Naive thymus-derived CD4-positive, alpha-beta T cell (primary cell): ENCODE measurements at regions of chr12 and their contacts with region 1.

Region 1: DNA sequence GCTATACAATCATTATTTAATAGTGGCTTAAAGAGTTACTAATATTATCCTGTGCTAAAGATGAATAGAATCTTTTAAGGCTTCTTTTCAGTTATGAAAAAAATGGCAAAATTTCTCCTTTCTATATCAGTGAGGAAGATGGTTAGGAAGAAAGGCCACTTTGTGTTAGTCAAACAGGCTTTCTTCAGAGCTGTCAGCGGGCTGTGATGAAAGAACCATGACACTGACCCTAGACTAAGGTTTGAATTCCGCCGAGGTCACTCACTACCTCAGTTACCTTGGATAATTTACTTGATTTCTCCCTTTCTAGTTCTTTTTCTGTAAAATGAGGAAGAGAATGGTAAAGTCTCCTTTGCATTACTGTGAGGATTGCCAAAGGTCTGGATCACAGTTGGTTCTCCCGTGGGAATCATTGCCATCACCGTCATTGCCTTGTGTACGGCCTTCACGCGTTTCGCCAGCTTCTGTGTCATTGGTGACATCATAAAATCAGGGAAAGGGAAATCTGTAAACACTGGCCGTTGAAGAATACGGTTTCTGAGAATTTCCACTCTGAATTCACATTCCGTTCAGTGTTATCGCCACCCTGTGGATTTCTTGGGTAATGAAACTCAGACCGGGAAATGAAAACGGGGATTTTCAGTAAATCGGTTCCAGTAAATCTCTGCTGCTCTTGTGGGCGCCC is 26.7 kb upstream of the YBX3 start:
- DNase-seq: peak; percentile 22 to 79 (median 67)
- ATAC-seq: peak; percentile 100
- H3K4me3 ChIP-seq: peak overlapping the region; percentile 1
- H3K4me3 Mint-ChIP-seq: peak overlapping the region in 8 of 10 donors; percentile 15 to 76 (median 64)
- H3K27ac ChIP-seq: no peak overlapping the region
- H3K27ac Mint-ChIP-seq: peak overlapping the region in 4 of 9 donors; percentile 7 to 60 (median 34)
- H3K4me1 ChIP-seq: peaks cover 0 to 4% of the 10 kb centered on the region in 2 donors
- H3K4me1 Mint-ChIP-seq: peaks cover 0 to 24% (median 6%) of the 10 kb centered on the region in 7 donors
- H3K27me3 ChIP-seq: peaks cover 0 to 4% of the 10 kb centered on the region in 2 donors
- H3K27me3 Mint-ChIP-seq: peaks cover 32 to 57% (median 33%) of the 10 kb centered on the region in 5 donors

Region 2: DNA sequence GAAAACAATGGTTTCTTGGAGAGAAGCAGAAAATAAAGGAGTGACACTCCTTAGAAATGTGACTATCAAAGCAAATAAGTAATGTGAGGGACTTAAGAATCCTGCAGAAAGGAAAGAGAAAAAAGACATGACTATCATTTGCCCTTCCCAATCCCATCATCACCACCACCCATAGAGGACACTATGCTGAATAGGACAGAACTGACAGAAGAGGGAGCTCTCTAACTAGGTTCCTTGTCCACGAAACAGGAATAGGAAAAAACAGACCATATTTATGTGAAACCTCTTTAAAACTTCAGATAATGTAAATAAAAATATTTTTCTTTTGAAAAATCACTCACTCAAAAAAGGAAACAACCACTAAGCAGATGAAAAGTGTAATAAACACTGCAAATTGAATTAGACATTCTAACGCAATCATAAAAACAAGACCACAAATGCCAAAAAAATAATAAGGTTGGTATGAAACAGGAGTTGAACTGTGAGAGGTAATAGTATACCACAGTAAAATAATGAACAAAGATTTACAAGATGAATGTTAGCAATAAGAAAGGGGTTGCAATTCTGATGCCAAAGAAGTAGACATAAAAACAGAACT is 418.1 kb before region 1 on chr12:
- CTCF ChIA-PET with region 1: no interaction called
- POLR2A ChIA-PET with region 1: no interaction called
- intact Hi-C with region 1: loop called (anchors 1 kb)
- DNase-seq: peak in 7 of 9 donors; percentile 9 to 51 (median 20)
- ATAC-seq: peak; percentile 63
- H3K4me3 ChIP-seq: no peak overlapping the region
- H3K4me3 Mint-ChIP-seq: no peak overlapping the region
- H3K27ac ChIP-seq: no peak overlapping the region
- H3K27ac Mint-ChIP-seq: peak overlapping the region in 1 of 9 donors; percentile 57
- H3K4me1 ChIP-seq: no peaks in the 10 kb centered on the region
- H3K4me1 Mint-ChIP-seq: peaks cover 0 to 6% (median 0%) of the 10 kb centered on the region in 7 donors
- H3K27me3 ChIP-seq: no peaks in the 10 kb centered on the region
- H3K27me3 Mint-ChIP-seq: peaks cover 0 to 6% (median 0%) of the 10 kb centered on the region in 5 donors

Region 3: GRCh38 chr12:10562306-10562933 is 187.4 kb before region 1 on chr12:
- CTCF ChIA-PET with region 1: no interaction called
- POLR2A ChIA-PET with region 1: no interaction called
- intact Hi-C with region 1: loop called in 1 of 2 experiments (anchors 1 kb)
- DNase-seq: peak in 7 of 9 donors; percentile 5 to 54 (median 40)
- ATAC-seq: peak; percentile 51
- H3K4me3 ChIP-seq: no peak overlapping the region
- H3K4me3 Mint-ChIP-seq: no peak overlapping the region
- H3K27ac ChIP-seq: no peak overlapping the region
- H3K27ac Mint-ChIP-seq: no peak overlapping the region
- H3K4me1 ChIP-seq: peaks cover 0 to 28% of the 10 kb centered on the region in 2 donors
- H3K4me1 Mint-ChIP-seq: peaks cover 0 to 16% (median 10%) of the 10 kb centered on the region in 7 donors
- H3K27me3 ChIP-seq: no peaks in the 10 kb centered on the region
- H3K27me3 Mint-ChIP-seq: peaks cover 7 to 40% (median 16%) of the 10 kb centered on the region in 5 donors

Region 4: GRCh38 chr12:10613349-10614055 is 136.3 kb before region 1 on chr12 and contains the start of gene MAGOHB:
- CTCF ChIA-PET with region 1: no interaction called
- POLR2A ChIA-PET with region 1: no interaction called
- intact Hi-C with region 1: loop called (anchors 1 to 2 kb)
- DNase-seq: peak; percentile 94 to 100 (median 97)
- ATAC-seq: peak; percentile 96
- H3K4me3 ChIP-seq: peak within 1 kb of the TSS; percentile 74
- H3K4me3 Mint-ChIP-seq: peak within 1 kb of the TSS; percentile 93 to 100 (median 98)
- H3K27ac ChIP-seq: peak within 1 kb of the TSS; percentile 93
- H3K27ac Mint-ChIP-seq: peak within 1 kb of the TSS; percentile 97 to 100 (median 100)
- H3K4me1 ChIP-seq: peaks cover 4 to 11% of the 10 kb centered on the region in 2 donors
- H3K4me1 Mint-ChIP-seq: peaks cover 12 to 38% (median 33%) of the 10 kb centered on the region in 7 donors
- H3K27me3 ChIP-seq: no peaks in the 10 kb centered on the region
- H3K27me3 Mint-ChIP-seq: peaks cover 0 to 26% (median 7%) of the 10 kb centered on the region in 5 donors
- total RNA-seq, gene MAGOHB: 12.1 to 43.1 (median 24.8) TPM

Region 5: GRCh38 chr12:10721651-10722501 is 28.0 kb before region 1 on chr12:
- CTCF ChIA-PET with region 1: no interaction called
- POLR2A ChIA-PET with region 1: no interaction called
- intact Hi-C with region 1: loop called in 1 of 2 experiments (anchors 1 kb)
- DNase-seq: peak; percentile 45 to 84 (median 74)
- ATAC-seq: peak; percentile 83
- H3K4me3 ChIP-seq: peak overlapping the region; percentile 83
- H3K4me3 Mint-ChIP-seq: peak overlapping the region; percentile 80 to 96 (median 93)
- H3K27ac ChIP-seq: peak overlapping the region; percentile 61
- H3K27ac Mint-ChIP-seq: peak overlapping the region; percentile 48 to 96 (median 87)
- H3K4me1 ChIP-seq: peaks cover 9 to 19% of the 10 kb centered on the region in 2 donors
- H3K4me1 Mint-ChIP-seq: peaks cover 14 to 43% (median 21%) of the 10 kb centered on the region in 7 donors
- H3K27me3 ChIP-seq: peaks cover 0 to 4% of the 10 kb centered on the region in 2 donors
- H3K27me3 Mint-ChIP-seq: peaks cover 20 to 60% (median 44%) of the 10 kb centered on the region in 5 donors

Region 6: GRCh38 chr12:10735428-10735827 is 14.4 kb before region 1 on chr12:
- CTCF ChIA-PET with region 1: no interaction called
- POLR2A ChIA-PET with region 1: no interaction called
- intact Hi-C with region 1: no loop called
- DNase-seq: no peak
- ATAC-seq: no peak
- H3K4me3 ChIP-seq: no peak overlapping the region
- H3K4me3 Mint-ChIP-seq: no peak overlapping the region
- H3K27ac ChIP-seq: no peak overlapping the region
- H3K27ac Mint-ChIP-seq: no peak overlapping the region
- H3K4me1 ChIP-seq: no peaks in the 10 kb centered on the region
- H3K4me1 Mint-ChIP-seq: peaks cover 0 to 7% (median 0%) of the 10 kb centered on the region in 7 donors
- H3K27me3 ChIP-seq: no peaks in the 10 kb centered on the region
- H3K27me3 Mint-ChIP-seq: peaks cover 7 to 47% (median 18%) of the 10 kb centered on the region in 5 donors

Region 7: DNA sequence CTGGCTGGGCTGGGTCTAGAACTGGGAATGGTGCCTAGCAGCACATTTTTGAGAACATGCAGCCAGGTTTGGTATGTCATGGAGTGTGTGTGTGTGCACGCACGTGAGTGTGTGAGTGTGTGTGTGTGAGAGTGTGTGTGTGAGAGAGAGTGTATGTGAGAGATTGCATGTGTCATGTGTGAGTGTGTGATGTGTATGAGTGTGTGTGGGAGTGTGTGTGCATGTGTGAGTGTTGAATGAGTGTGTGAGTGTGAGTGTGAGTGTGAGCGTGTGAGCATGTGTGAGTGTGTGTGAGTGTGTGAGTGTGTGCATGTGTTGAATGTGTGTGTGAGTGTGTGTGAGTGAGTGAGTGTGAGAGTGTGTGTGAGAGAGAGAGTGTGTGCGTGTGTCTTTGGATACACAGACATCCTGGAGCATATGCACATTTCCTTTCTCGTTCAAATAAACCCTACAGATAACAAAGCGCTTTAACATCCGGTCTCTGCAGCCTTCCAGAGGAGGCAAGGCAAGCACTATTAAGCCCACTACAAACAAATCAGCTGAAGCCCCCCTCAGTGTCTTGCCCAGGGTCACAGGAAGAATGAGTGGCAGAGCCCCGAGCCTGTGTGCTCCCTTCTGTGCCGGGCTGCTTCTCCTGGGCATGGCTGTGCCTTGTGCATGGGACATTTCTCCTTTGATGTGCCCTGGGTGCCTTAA is 790.9 kb after region 1 on chr12:
- CTCF ChIA-PET with region 1: no interaction called
- POLR2A ChIA-PET with region 1: no interaction called
- intact Hi-C with region 1: no loop called
- DNase-seq: peak in 3 of 9 donors; percentile 25 to 27 (median 26)
- ATAC-seq: no peak
- H3K4me3 ChIP-seq: no peak overlapping the region
- H3K4me3 Mint-ChIP-seq: peak overlapping the region in 9 of 10 donors; percentile 0 to 74 (median 45)
- H3K27ac ChIP-seq: no peak overlapping the region
- H3K27ac Mint-ChIP-seq: peak overlapping the region; percentile 0 to 83 (median 24)
- H3K4me1 ChIP-seq: peaks cover 16 to 46% of the 10 kb centered on the region in 2 donors
- H3K4me1 Mint-ChIP-seq: peaks cover 29 to 59% (median 50%) of the 10 kb centered on the region in 7 donors
- H3K27me3 ChIP-seq: no peaks in the 10 kb centered on the region
- H3K27me3 Mint-ChIP-seq: peaks cover 0 to 6% (median 0%) of the 10 kb centered on the region in 5 donors